ENCODE measurements at regions of chr19 and their contacts with region 1.

Region 1: DNA sequence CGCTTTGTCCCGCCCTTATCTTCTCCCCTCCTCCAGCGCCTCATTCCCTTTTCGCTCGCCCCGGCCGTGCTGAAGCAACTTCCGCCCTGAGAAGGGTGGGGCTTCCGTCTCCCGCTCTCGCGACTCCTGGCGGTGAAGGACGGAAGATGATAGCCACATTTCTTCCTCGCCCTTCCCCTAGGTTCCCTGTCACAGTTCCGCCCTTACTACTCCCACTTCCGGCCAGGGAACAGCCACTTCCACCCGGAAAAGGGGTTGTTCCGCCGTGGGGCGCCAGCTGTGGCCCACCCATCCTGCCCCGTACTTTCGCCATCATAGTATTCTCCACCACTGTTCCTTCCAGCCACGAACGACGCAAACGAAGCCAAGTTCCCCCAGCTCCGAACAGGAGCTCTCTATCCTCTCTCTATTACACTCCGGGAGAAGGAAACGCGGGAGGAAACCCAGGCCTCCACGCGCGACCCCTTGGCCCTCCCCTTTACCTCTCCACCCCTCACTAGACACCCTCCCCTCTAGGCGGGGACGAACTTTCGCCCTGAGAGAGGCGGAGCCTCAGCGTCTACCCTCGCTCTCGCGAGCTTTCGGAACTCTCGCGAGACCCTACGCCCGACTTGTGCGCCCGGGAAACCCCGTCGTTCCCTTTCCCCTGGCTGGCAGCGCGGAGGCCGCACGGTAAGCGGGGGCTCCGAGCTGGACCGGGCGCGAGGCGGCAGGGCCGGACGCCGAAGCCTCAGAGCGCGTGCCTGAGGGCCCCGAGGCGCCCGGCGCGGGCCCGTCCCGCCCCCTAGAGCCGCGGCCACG is at the start of gene RPS19:
- DNase-seq: peak; percentile 97
- H3K4me3 Mint-ChIP-seq: peak within 1 kb of the TSS; percentile 94
- H3K27ac Mint-ChIP-seq: peak within 1 kb of the TSS; percentile 99
- H3K4me1 Mint-ChIP-seq: peaks cover 35% of the 10 kb centered on the region
- H3K27me3 Mint-ChIP-seq: peaks cover 4% of the 10 kb centered on the region
- total RNA-seq, gene RPS19: 2,928 and 2,943 TPM in 2 replicates

Region 2: DNA sequence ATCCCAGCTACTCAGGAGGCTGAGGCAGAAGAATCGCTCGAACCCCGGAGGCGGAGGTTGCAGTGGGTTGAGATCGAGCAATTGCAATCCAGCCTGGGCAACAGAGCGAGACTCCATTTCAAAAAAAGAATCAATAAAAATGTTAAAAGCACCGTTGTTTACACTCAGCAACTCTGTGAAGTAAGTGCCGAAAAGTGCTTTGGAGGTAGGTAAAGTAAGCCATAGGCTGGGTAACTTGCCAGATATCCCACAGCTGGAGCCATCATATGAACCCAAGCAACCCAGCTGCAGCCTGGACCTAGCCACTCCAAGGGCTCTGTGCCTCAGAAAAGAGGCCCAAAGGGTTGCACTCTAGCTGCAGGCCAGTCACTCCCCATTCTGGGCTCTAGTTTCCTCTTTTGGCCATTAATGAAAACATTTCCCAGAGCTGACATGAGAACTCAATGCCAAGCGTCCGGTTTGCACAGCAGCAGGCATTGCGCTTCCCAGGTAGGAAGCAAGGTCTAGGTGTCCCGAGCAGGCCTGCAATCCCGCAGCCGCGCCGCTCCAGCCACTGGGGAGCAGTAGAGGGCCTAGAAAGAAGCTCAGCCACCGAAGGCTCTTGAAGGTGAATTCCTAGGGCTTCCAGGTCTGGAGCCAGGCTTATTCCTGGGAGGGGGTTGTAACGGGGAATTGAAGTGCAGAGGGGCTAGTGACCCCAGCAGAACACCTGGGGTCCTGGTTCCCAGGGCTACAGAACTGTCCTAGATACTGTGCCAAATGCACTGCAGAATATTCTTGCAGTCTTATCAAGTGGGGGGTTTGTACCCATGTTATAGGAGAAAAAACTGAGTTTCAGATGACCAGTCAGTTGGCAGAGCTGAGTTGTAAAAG is 13.2 kb after region 1 on chr19:
- intact Hi-C with region 1: loop called (anchors 1 kb)
- DNase-seq: peak; percentile 56
- H3K4me3 Mint-ChIP-seq: peak overlapping the region; percentile 21
- H3K27ac Mint-ChIP-seq: peak overlapping the region; percentile 72
- H3K4me1 Mint-ChIP-seq: peaks cover 68% of the 10 kb centered on the region
- H3K27me3 Mint-ChIP-seq: no peaks in the 10 kb centered on the region

Region 3: DNA sequence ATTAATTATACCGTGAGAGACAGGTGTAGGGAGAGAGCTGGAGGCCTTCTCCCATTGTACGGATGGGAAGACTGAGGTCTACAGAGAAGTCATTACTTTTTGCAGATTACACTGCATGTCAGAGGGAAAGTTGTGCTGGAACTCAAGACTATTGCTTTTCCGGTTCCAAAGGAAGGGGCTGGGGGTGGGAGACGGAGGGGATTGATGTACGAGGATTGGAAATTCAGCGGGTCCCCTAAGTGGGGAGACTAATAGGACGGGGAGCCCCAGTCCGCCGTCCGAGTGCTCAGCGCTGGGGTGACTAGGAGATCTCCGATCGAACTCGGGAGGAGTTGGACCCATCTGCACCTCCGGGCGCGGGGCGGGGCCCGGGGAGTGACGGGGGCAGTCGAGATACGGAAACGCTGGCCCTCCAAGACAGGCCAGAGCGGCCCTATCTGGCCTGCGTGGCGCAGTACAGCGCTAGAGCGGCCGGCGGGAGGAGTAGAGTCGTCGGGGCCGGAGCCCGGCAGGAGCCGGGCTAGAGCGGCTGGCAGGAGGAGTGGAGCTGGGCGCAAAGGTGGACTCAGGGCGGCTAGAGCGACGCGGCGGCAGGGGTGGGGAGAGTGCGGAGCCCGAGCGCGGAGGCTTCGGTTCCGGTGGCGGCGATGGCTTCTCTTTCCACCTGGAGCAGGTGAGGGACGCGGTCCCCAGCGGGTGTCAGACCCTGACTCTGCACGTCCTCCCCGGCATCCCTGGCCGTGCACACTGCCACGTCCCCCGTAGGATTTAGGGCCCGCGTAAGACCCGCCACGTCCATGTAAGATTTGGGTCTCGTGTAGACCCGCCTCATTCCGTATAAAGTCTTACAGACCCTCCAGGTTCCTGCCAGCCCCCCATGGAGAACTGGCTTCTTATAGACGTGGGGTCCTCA is 24.3 kb after region 1 on chr19:
- intact Hi-C with region 1: loop called (anchors 1 kb)
- DNase-seq: peak; percentile 90
- H3K4me3 Mint-ChIP-seq: peak overlapping the region; percentile 81
- H3K27ac Mint-ChIP-seq: peak overlapping the region; percentile 94
- H3K4me1 Mint-ChIP-seq: peaks cover 45% of the 10 kb centered on the region
- H3K27me3 Mint-ChIP-seq: no peaks in the 10 kb centered on the region

Region 4: DNA sequence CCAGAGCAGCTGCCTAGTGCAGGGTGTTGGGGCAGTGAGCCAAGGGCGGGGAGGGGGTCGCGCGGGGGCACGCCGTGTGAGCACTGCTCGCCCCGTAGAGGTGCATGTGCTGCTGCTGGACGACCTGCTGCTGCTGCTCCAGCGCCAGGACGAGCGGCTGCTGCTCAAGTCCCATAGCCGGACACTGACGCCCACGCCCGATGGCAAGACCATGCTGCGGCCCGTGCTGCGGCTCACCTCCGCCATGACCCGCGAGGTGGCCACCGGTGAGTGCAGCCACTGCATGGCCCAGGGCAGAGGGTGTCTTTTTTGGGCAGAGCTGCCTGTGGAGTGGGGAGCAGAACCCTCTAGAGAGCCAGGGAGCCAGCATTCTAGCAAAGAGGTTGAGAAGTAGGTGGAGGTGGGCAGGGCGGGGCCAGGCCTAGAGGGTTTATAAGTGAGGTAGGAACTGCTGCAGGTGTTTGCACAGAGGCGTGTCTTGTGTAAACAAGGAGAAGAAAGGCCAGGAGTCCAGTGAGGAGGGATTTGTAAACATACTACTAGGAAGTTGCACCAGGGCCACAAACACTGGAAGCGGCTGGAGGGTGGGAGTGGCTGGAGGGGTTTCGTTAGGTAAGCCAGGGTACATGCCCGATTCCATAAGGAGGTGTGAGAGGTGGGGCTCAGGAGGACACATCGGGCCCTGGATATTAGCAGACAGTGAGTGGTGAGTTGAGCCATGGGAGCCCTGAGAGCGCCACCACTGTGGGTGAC is 44.5 kb after region 1 on chr19:
- intact Hi-C with region 1: no loop called
- DNase-seq: no peak
- H3K4me3 Mint-ChIP-seq: no peak overlapping the region
- H3K27ac Mint-ChIP-seq: no peak overlapping the region
- H3K4me1 Mint-ChIP-seq: peaks cover 6% of the 10 kb centered on the region
- H3K27me3 Mint-ChIP-seq: no peaks in the 10 kb centered on the region

Region 5: DNA sequence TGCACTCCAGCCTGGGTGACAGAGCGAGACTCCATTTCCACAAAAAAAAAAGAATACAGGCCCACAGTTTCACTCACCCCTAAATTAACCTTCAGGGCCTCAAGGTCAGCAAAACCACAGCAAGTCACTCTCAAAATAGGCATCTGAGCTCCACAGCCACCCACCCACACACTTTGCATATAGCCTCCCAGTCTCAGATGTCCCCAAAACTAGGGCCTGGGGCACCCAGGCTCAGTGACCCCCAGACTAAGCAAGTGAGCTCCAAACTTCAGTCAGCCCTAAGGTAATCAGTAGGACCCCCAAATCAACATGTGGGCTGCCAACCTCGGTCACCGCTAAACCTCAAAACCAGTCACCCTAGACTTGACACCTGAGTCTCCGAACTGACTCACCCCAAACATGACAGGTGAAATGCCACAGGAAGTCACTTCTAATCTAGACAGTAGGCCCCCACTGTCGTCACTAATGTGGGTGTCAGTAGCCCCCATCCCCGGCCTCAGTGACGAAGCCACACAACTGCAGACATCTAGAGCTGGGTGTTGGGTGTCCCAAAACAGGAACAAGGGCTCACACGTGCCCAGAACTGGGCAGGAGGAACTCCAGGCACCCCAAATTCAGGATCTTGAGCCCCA is 85.4 kb after region 1 on chr19:
- intact Hi-C with region 1: loop called (anchors 1 kb)
- DNase-seq: peak; percentile 67
- H3K4me3 Mint-ChIP-seq: peak overlapping the region; percentile 13
- H3K27ac Mint-ChIP-seq: peak overlapping the region; percentile 97
- H3K4me1 Mint-ChIP-seq: peaks cover 44% of the 10 kb centered on the region
- H3K27me3 Mint-ChIP-seq: peaks cover 6% of the 10 kb centered on the region

Region 6: DNA sequence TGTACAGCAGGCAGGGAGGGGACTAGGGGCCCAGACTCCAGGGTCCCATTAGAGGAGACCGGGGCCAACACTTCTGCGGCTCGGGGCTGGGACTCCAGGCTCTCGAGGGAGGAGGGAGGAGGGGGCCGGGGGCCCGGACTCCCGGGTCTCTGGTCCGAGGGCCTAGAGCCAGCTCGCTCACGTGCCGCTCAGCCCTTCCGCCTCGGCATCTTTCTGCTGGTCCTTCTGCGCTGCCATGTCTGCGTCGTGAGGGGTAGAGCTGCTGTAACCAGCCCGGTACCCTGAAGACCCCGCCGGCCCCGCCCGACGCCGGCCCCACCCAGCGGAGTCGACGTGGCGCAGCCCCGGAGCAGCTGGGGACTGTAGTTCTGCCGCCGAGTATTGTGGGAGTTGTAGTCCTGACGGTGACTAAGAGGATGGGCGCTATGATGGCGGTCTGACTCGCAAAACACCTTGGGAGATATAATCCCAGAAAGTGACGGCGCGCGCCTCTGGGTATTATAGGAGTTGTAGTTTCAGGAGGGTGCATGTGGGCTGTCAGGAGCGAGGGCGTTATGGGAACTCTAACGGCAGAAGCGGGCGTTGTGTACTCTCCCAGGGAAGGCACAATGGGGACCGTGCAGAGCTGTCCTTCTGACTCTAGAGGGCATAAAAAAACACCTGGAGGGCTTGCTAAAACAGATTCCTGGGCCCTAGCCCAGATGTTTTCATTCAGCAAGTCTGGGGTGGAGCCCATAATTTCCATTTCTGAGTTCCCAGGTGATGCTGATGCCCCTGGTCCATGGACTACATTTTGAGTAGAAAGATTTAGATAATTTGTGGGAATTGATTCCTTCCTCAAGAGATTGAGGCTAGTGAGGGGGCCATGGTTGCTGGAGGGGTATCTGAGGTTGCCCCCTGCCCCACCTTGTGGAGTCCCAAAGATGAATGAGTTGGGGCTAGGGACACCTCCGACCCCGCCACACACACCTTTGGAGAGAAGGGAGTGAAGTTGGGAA is 99.5 kb after region 1 on chr19 and contains the start of gene RABAC1:
- intact Hi-C with region 1: loop called (anchors 1 kb)
- DNase-seq: peak; percentile 84
- H3K4me3 Mint-ChIP-seq: peak within 1 kb of the TSS; percentile 95
- H3K27ac Mint-ChIP-seq: peak within 1 kb of the TSS; percentile 85
- H3K4me1 Mint-ChIP-seq: peaks cover 11% of the 10 kb centered on the region
- H3K27me3 Mint-ChIP-seq: no peaks in the 10 kb centered on the region
- total RNA-seq, gene RABAC1: 54.0 and 57.6 TPM in 2 replicates

Region 7: DNA sequence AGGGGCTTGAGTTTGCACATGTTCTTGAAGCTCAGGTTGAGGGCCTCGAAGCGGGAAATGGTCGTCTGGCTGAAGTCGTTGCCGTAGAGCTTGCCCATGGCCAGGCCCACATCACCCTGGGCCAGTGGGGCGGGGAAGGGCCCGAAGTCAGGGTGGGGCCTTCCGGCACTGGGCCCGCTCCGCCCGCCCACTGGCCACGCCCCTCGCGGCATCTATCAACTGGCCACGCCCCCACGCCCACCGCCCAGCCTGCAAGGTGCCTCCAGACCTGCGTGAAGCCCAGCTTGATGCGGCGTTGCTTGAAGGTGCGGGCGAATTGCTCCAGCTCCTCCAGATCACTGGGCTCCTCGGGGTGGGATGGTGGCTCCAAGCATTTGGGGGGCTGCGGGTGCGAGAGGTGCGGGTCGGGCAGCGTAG is 236.0 kb after region 1 on chr19:
- intact Hi-C with region 1: no loop called
- DNase-seq: no peak
- H3K4me3 Mint-ChIP-seq: no peak overlapping the region
- H3K27ac Mint-ChIP-seq: no peak overlapping the region
- H3K4me1 Mint-ChIP-seq: peaks cover 4% of the 10 kb centered on the region
- H3K27me3 Mint-ChIP-seq: no peaks in the 10 kb centered on the region

Region 8: DNA sequence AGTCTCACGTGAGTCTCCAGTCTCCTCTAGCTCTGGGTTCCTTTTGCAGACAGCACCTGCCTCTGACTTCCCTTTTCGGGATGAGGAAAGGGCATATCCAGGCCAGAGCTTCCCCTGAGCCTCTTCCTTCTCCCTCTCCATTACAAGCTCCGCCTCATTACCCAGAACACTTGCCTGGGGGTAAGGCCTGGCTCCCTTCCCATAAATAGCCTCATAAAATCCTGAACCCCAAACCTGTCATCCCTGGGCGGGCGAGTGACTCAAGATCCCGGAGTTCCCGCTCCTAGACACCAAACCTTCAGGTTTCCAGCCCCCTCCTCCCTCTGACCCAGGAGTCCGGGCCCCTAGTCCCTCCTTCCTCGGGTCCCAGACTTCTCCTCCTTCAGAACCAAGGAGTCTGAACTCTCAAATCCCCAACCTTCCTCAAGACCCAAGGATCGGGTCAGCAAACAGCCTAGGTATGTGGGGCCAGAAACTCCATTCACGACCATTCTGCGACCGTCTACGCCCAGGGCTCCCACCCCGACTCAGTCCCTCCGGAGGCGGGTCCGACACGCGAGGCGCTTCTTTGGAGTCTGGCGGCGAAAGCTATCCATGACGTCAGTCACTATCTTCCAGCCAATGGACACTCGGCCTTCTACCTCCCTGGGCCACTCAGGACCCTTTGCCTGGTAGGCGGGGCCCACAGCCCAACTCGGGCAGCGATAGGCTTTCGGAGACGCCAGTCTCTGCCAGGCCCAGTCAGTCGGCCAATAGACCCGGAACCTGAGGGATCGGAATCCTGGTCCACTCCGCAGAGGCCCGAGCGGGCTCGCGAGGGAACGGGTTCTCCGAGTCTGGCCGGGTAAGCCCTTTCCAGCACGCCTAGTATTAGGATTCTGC is 536.8 kb after region 1 on chr19:
- intact Hi-C with region 1: loop called (anchors 5 kb)
- DNase-seq: peak; percentile 98
- H3K4me3 Mint-ChIP-seq: peak overlapping the region; percentile 87
- H3K27ac Mint-ChIP-seq: peak overlapping the region; percentile 81
- H3K4me1 Mint-ChIP-seq: peaks cover 32% of the 10 kb centered on the region
- H3K27me3 Mint-ChIP-seq: peaks cover 7% of the 10 kb centered on the region

Region 9: GRCh38 chr19:42628411-42629140 is 768.8 kb after region 1 on chr19:
- intact Hi-C with region 1: loop called (anchors 5 kb)
- DNase-seq: peak; percentile 17
- H3K4me3 Mint-ChIP-seq: peak overlapping the region; percentile 54
- H3K27ac Mint-ChIP-seq: peak overlapping the region; percentile 97
- H3K4me1 Mint-ChIP-seq: peaks cover 36% of the 10 kb centered on the region
- H3K27me3 Mint-ChIP-seq: peaks cover 2% of the 10 kb centered on the region

Measured in activated T-helper 2 cell treated with anti-CD3 and anti-CD28 coated beads, Interferon-gamma antibody, Interleukin-2, Interleukin-4, amounts not matched to agents 10 μg/mL and 5 μg/mL and 100 μg/mL, durations not matched to agents 14 hours and 24 hours and 36 hours (primary cell).